Esophagus squamous epithelium (tissue), 5 donors: ENCODE measurements at regions of chr10 and their contacts with region 1.

Region 1: GRCh38 chr10:28256797-28257196 is 46.1 kb downstream of the MPP7 start:
- DNase-seq: no peak
- H3K4me3 ChIP-seq: no peak overlapping the region
- H3K27ac ChIP-seq: peak overlapping the region in 3 of 4 donors; percentile 9 to 22 (median 18)
- H3K4me1 ChIP-seq: peaks cover 0 to 58% (median 19%) of the 10 kb centered on the region in 3 donors
- H3K27me3 ChIP-seq: no peaks in the 10 kb centered on the region
- CTCF ChIP-seq: no peak
- POLR2A ChIP-seq: no peak

Region 2: GRCh38 chr10:28077889-28078288 is 178.9 kb before region 1 on chr10:
- intact Hi-C with region 1: no loop called
- DNase-seq: no peak
- H3K4me3 ChIP-seq: no peak overlapping the region
- H3K27ac ChIP-seq: peak overlapping the region in 1 of 4 donors; percentile 6
- H3K4me1 ChIP-seq: no peaks in the 10 kb centered on the region
- H3K27me3 ChIP-seq: no peaks in the 10 kb centered on the region
- CTCF ChIP-seq: no peak
- POLR2A ChIP-seq: no peak

Region 3: DNA sequence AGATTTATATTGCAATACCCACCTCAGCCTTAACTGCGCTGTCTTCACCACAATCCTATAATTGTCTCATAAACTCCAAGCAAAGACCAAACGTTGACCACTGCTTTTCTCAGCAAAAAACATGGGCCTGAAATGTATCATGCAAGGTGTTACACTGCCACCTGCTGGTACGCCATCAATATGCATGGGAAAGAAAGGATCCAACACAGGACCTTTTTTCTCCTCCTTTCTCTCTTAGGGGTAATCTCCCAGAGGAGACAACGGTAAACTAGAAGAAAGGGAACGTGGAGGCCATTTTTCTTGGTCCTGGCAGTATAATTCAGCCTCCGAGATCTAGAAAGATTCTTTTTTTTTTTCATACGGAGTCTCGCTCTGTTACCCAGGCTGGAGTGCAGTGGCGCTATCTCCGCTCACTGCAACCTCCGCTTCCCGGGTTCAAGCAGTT is 125.1 kb after region 1 on chr10:
- intact Hi-C with region 1: loop called (anchors 5 kb)
- DNase-seq: peak; percentile 17
- H3K4me3 ChIP-seq: no peak overlapping the region
- H3K27ac ChIP-seq: peak overlapping the region; percentile 54 to 86 (median 74)
- H3K4me1 ChIP-seq: peaks cover 0 to 64% (median 9%) of the 10 kb centered on the region in 3 donors
- H3K27me3 ChIP-seq: no peaks in the 10 kb centered on the region
- CTCF ChIP-seq: peak; percentile 90 to 98 (median 94)
- POLR2A ChIP-seq: no peak